Activated T-helper 1 cell treated with anti-CD3 and anti-CD28 coated beads, Interleukin-12 subunit alpha, Interleukin-12 subunit beta, Interleukin-2, Interleukin-4 antibody, amounts not matched to agents 30 ng/mL and 10 ng/mL and 1 ng/mL, durations not matched to agents 14 hours and 24 hours and 36 hours (primary cell): ENCODE measurements at regions of chr14 and their contacts with region 1.

Region 1: DNA sequence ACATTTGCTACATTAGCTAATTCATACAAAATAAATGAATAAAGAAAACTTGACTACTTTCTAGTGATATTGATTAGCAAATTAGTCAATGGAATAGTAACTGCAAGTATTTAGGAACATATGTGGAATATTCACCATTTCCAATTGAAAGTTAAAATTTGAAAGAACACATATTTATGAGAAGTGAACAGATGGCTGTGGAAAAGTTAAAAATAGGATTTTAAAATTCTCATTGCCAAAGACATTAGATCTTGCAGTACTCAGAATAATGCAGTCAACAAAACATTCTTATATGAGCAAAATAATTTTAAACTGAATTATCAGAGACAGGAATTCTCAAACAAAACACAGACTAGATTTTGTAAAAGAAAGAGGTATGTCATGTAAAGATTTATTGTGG is 613.9 kb upstream of the NOVA1 start:
- DNase-seq: no peak
- H3K4me3 Mint-ChIP-seq: no peak overlapping the region
- H3K27ac Mint-ChIP-seq: no peak overlapping the region
- H3K4me1 Mint-ChIP-seq: no peaks in the 10 kb centered on the region
- H3K27me3 Mint-ChIP-seq: no peaks in the 10 kb centered on the region

Region 2: GRCh38 chr14:28468191-28469151 is 1256.7 kb after region 1 on chr14:
- intact Hi-C with region 1: loop called (anchors 10 kb)
- DNase-seq: no peak
- H3K4me3 Mint-ChIP-seq: no peak overlapping the region
- H3K27ac Mint-ChIP-seq: no peak overlapping the region
- H3K4me1 Mint-ChIP-seq: no peaks in the 10 kb centered on the region
- H3K27me3 Mint-ChIP-seq: no peaks in the 10 kb centered on the region